ENCODE measurements at regions of chr7 and their contacts with region 1.

Region 1: GRCh38 chr7:6516387-6516983 is 34.8 kb downstream of the GRID2IP start:
- DNase-seq: peak; percentile 74 to 97 (median 87)

Region 2: GRCh38 chr7:5657901-5658300 is 858.6 kb before region 1 on chr7:
- intact Hi-C with region 1: no loop called
- DNase-seq: peak in 2 of 10 donors; percentile 4 to 9

Region 3: DNA sequence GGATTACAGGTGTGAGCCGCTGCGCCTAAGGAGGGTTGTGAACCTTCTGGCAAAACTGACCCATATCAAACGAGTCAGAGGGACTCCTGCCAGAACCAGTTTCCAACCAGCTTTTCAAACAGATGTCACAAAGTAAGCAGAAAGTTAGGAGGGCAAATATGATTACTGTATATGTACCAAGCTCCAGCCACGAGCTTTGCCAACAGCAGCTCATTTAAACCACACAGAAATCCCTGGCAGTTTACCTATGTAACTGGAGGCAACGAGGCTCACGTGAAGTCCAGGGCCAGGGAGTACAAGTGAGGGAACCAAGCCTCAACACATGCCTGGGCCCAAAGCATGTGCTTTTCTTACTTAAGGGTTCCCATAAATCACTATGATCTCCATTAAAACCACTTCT is 56.2 kb before region 1 on chr7:
- intact Hi-C with region 1: no loop called
- DNase-seq: no peak

Region 4: DNA sequence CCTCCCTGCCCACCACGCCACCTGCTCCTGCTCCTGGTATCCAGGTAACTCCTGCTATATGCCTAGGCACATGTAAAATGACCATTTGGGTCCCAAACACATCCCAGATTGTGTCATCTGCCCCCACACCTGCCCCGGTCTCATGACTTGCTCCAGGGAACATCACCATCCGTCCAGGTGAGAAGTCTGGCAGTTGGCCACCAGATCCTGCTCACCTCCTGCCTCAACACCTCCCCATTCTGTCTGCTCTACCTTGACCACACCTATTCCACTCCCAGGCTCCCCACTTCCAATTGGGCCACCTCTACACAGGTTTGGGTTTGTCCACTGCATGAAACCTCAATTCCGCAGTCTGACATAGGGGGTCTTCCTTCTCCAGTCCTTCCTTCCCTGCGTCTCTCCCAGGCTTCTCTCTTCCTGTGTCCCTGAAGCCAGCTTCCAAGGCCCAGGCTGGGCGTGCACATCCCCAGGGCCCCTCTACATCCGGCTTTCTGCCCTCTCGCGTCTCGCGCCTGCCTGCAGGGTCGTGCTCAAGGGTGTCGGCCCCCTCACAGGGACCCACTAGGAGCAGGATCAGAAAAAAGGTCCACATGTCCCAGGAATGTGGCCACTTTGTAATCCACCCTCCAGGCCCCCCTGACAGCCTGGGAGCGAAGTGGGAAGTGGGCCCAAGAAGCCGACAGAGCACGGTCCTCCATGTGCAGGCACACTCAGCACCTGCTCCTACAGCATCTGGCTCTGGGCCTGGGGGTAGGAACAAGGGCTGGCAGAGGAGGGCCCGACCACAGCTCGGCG is 19.4 kb before region 1 on chr7:
- intact Hi-C with region 1: no loop called
- DNase-seq: peak in 1 of 10 donors; percentile 37

Region 5: GRCh38 chr7:6558837-6559236 is 42.4 kb after region 1 on chr7:
- intact Hi-C with region 1: no loop called
- DNase-seq: peak in 1 of 10 donors; percentile 24

Region 6: DNA sequence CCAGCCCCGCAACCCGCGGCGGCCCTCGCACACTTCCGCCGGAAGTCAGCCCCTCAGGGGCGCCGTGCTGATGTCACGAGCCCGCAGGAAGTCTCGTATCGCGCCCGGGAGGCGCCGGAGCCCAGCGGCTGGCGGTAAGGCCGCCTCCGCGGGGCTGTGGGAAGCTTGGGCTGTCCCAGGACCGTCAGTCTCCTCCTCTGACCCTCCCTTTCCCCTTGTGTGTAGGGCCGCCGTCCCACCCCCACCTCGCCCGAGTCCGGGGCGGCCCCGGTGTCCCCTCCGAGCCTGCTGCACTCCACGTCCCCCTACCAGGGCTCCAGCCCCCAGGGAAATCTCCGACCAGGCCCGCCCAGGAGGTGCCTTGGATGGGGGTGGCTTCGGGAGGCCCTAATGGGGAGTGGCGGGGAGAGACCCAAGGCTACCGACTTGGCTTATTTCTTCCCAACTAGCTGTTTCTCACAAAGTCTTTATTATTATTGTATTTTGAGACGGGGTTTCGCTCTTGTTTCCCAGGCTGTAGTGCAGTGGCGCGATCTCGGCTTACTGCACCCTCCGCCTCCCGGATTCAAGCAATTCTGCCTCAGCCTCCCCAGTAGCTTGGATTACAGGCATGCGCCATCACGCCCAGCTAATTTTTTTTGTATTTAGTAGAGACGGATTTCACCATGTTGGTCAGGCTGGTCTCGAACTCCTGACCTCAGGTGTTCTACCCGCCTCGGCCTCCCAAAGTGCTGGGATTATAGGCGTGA is 61.1 kb after region 1 on chr7 and contains the start of gene ZDHHC4:
- intact Hi-C with region 1: loop called (anchors 5 kb)
- DNase-seq: peak; percentile 78 to 98 (median 88)

Measured in posterior cingulate gyrus (tissue), 11 donors.